ENCODE measurements at regions of chr1 and their contacts with region 1.

Region 1: DNA sequence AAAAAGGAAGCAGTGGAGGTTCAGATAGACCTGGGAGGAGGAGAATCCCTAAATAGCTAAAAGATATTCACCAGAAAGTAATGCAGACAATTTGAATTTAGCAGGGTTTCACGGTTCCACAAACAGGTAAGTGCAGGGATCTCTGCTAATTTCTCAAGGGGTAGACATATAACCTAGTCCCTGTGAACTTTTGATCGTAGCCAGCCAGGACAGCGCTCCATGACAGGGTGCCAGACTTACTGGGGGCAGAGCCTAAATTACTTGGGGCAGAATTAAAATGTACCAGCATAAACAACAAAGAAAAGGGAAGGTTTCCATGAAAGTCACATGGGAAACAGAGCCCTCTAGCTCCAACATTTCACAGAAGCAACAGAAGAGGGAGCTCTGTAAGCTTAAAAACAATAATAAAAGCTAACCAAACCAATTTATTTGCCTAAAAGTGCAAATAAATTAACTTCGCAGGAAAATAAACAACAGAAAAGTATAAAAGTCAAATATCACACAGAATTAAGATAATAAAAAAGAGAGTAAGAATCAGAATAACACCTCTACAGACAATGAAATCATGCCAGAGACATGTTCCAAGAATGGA is 198.3 kb downstream of the DUSP10 start:
- DNase-seq: no peak
- ATAC-seq: peak in 3 of 8 donors; percentile 22 to 61 (median 37)
- H3K4me3 ChIP-seq: no peak overlapping the region
- H3K27ac ChIP-seq: no peak overlapping the region
- H3K4me1 ChIP-seq: no peaks in the 10 kb centered on the region
- H3K27me3 ChIP-seq: peaks cover 0 to 3% (median 0%) of the 10 kb centered on the region in 7 donors
- CTCF ChIP-seq: peak; percentile 11 to 69 (median 60)

Region 2: GRCh38 chr1:220999872-221000863 is 543.5 kb before region 1 on chr1:
- intact Hi-C with region 1: no loop called
- DNase-seq: peak in 1 of 2 donors; percentile 53
- ATAC-seq: peak; percentile 84 to 96 (median 90)
- H3K4me3 ChIP-seq: no peak overlapping the region
- H3K27ac ChIP-seq: peak overlapping the region in 9 of 10 donors; percentile 5 to 84 (median 52)
- H3K4me1 ChIP-seq: peaks cover 0 to 23% (median 7%) of the 10 kb centered on the region in 9 donors
- H3K27me3 ChIP-seq: no peaks in the 10 kb centered on the region
- CTCF ChIP-seq: no peak

Region 3: GRCh38 chr1:221458447-221459156 is 85.0 kb before region 1 on chr1:
- intact Hi-C with region 1: no loop called
- DNase-seq: no peak
- ATAC-seq: peak in 6 of 8 donors; percentile 46 to 93 (median 68)
- H3K4me3 ChIP-seq: no peak overlapping the region
- H3K27ac ChIP-seq: peak overlapping the region in 1 of 10 donors; percentile 24
- H3K4me1 ChIP-seq: no peaks in the 10 kb centered on the region
- H3K27me3 ChIP-seq: peaks cover 0 to 6% (median 0%) of the 10 kb centered on the region in 7 donors
- CTCF ChIP-seq: no peak

Region 4: GRCh38 chr1:221487781-221488524 is 55.7 kb before region 1 on chr1:
- intact Hi-C with region 1: loop called in 1 of 10 experiments (anchors 10 kb)
- DNase-seq: no peak
- ATAC-seq: no peak
- H3K4me3 ChIP-seq: no peak overlapping the region
- H3K27ac ChIP-seq: no peak overlapping the region
- H3K4me1 ChIP-seq: no peaks in the 10 kb centered on the region
- H3K27me3 ChIP-seq: peaks cover 0 to 10% (median 0%) of the 10 kb centered on the region in 7 donors
- CTCF ChIP-seq: no peak

Region 5: DNA sequence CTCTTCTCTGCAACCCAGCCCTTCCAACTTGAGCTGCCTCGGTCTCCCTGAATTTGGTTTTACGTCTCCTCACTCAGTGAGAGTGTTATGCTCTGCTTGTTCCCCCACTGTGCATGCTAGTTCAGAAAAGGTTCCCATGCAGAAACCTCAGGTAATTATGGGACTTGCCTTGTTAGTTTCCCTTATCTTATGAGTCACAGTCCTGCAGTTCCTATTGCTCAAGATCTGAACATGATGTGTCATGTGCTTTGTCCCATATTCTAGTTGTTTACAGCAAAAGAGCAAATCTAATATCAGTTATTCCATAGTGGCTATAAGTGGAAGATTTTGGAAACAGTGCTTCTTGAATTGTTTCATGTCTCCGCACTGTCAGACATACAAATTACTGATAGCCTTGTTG is 123.9 kb after region 1 on chr1:
- intact Hi-C with region 1: loop called in 1 of 10 experiments (anchors 10 kb)
- DNase-seq: no peak
- ATAC-seq: no peak
- H3K4me3 ChIP-seq: no peak overlapping the region
- H3K27ac ChIP-seq: no peak overlapping the region
- H3K4me1 ChIP-seq: peaks cover 0 to 14% (median 0%) of the 10 kb centered on the region in 9 donors
- H3K27me3 ChIP-seq: peaks cover 0 to 4% (median 0%) of the 10 kb centered on the region in 7 donors
- CTCF ChIP-seq: no peak

Region 6: DNA sequence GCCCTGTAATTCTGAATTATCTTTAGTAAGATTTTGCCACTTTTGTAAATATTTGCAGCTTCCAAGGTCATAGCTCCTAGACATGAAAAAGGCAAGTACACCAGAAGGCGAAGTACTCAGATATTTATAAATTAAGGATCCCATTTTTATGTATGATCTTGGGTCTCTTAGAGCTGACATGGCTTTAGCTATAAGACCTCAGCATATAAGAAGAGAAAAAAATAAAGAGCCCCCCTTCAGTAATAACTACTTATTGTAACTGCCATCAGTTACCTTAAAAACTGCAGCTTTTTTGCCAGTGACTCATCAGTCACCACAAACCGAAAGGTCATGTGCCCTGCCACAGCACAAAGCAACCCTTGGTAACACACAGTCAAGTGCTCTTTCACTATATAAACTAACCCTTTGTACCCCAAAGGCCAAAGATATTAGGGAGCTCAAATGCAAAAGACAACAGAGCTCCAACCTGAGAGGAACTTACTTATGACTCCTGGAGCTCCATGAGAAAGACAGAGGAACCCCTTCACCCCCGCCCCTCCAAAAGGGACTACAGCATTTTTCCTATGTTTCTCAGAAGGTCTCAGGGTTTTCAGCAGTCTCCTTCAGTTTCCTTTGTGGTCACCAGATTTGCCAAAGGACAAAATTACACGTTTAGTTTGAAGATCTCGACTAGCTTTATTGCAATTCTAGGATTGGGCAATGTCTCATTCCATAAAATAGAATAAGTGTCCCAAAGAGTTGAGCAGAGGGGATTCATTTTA is 418.1 kb after region 1 on chr1:
- intact Hi-C with region 1: no loop called
- DNase-seq: no peak
- ATAC-seq: peak in 1 of 8 donors; percentile 35
- H3K4me3 ChIP-seq: no peak overlapping the region
- H3K27ac ChIP-seq: no peak overlapping the region
- H3K4me1 ChIP-seq: peaks cover 0 to 9% (median 0%) of the 10 kb centered on the region in 9 donors
- H3K27me3 ChIP-seq: no peaks in the 10 kb centered on the region
- CTCF ChIP-seq: no peak

Region 7: GRCh38 chr1:222009105-222009730 is 465.6 kb after region 1 on chr1:
- intact Hi-C with region 1: loop called in 1 of 10 experiments (anchors 10 kb)
- DNase-seq: no peak
- ATAC-seq: peak in 3 of 8 donors; percentile 41 to 48 (median 47)
- H3K4me3 ChIP-seq: no peak overlapping the region
- H3K27ac ChIP-seq: no peak overlapping the region
- H3K4me1 ChIP-seq: peaks cover 0 to 5% (median 0%) of the 10 kb centered on the region in 9 donors
- H3K27me3 ChIP-seq: no peaks in the 10 kb centered on the region
- CTCF ChIP-seq: peak in 7 of 9 donors; percentile 23 to 55 (median 49)